CD14-positive monocyte (primary cell): ENCODE measurements at regions of chr15 and their contacts with region 1.

Region 1: GRCh38 chr15:66774001-66774814 is 72.2 kb downstream of the SMAD6 start:
- DNase-seq: peak; percentile 16 to 41 (median 22)
- H3K4me3 ChIP-seq: no peak overlapping the region
- H3K4me3 Mint-ChIP-seq: no peak overlapping the region
- H3K27ac ChIP-seq: no peak overlapping the region
- H3K27ac Mint-ChIP-seq: no peak overlapping the region
- H3K4me1 ChIP-seq: no peaks in the 10 kb centered on the region
- H3K4me1 Mint-ChIP-seq: peaks cover 4% of the 10 kb centered on the region
- H3K27me3 ChIP-seq: no peaks in the 10 kb centered on the region
- H3K27me3 Mint-ChIP-seq: peaks cover 3 to 8% (median 3%) of the 10 kb centered on the region in 3 donors
- CTCF ChIP-seq: peak; percentile 63

Region 2: DNA sequence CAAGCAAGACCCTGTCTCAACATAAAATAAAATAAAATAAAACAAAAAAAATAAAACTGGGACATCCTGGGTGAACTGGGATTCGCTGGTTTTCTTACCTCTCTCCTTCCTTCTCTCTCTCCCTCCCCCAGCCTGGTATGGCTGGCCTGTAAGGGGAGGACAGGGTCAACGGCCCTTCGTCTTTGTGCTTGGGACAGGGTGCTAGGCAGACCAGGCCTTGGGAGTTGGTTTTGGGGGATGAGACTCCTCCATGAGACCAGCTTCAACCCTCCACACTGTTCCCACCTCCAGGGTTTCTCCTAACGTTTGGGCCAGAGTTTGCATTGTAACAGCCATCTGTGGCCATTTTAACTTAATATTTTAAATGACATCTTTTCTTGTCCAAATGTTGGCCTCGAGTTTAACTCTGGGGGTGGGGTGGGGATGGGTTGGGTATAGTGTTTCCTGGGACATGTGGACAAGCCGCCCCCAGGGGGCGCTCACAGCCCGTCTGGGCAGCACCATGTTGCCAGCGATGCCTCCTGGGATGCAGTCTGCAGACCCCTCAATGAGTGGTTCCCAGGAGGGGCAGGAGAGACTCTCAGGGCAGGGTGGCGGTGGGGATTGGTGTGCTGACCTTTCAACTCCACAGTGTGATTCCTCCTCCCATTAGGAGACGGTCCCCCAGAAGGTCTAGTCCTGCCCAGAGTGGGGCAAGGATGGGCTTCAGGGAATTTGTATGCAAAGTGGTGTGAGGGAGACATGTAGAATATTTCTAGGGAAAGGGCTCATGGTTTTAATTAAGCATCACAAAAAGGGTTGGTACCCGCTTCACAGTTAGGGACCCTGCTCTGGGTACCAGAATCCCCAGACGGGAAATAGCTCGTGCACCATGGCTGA is 170.7 kb before region 1 on chr15:
- intact Hi-C with region 1: loop called (anchors 1 to 5 kb)
- DNase-seq: peak; percentile 59 to 77 (median 66)
- H3K4me3 ChIP-seq: no peak overlapping the region
- H3K4me3 Mint-ChIP-seq: no peak overlapping the region
- H3K27ac ChIP-seq: no peak overlapping the region
- H3K27ac Mint-ChIP-seq: peak overlapping the region in 1 of 7 donors; percentile 80
- H3K4me1 ChIP-seq: no peaks in the 10 kb centered on the region
- H3K4me1 Mint-ChIP-seq: no peaks in the 10 kb centered on the region
- H3K27me3 ChIP-seq: no peaks in the 10 kb centered on the region
- H3K27me3 Mint-ChIP-seq: peaks cover 2 to 12% (median 3%) of the 10 kb centered on the region in 3 donors
- CTCF ChIP-seq: peak; percentile 90

Region 3: GRCh38 chr15:66619151-66619903 is 154.9 kb before region 1 on chr15:
- intact Hi-C with region 1: loop called in 1 of 2 experiments (anchors 5 kb)
- DNase-seq: peak; percentile 52 to 73 (median 70)
- H3K4me3 ChIP-seq: no peak overlapping the region
- H3K4me3 Mint-ChIP-seq: no peak overlapping the region
- H3K27ac ChIP-seq: peak overlapping the region in 1 of 2 donors; percentile 34
- H3K27ac Mint-ChIP-seq: peak overlapping the region in 3 of 7 donors; percentile 40 to 79 (median 60)
- H3K4me1 ChIP-seq: peaks cover 65 to 69% of the 10 kb centered on the region in 2 donors
- H3K4me1 Mint-ChIP-seq: peaks cover 70% of the 10 kb centered on the region
- H3K27me3 ChIP-seq: peaks cover 0 to 6% of the 10 kb centered on the region in 2 donors
- H3K27me3 Mint-ChIP-seq: peaks cover 3 to 14% (median 5%) of the 10 kb centered on the region in 3 donors
- CTCF ChIP-seq: peak; percentile 94